ENCODE measurements at regions of chr9 and their contacts with region 1.

Region 1: DNA sequence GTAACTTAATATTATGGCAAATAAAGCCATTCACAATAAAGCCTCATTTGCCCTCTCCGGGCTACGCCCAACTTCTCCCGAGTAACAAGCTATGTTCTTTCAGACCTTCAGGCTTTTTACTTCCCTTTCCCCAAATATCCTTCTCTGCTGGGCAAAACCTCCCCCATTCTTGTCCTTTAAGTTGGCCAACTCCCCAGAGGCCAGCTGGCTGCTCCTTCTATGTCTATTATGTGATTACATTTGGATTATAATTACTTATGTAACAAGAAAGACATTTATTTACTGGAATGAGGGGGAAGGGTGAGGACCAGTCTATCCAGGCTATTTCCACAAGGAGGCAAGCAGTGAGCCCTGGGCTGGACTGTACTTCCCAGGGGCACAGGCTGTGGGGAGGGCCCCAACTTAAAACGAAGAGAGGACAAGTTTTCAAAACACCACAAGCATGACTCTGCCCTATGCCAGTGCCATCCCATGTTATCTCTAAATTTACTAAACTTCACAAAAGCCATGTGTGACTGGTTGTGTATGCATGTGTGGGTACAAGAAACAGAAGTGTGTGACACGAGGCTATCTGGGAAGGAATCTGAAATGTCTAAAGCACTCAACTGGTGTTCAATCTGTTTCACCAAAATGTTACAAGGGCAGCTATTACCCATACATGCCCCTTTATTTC is 84.5 kb downstream of the GNAQ start:
- DNase-seq: no peak
- H3K4me3 ChIP-seq: no peak overlapping the region
- H3K27ac ChIP-seq: no peak overlapping the region
- H3K4me1 ChIP-seq: peaks cover under 1% of the 10 kb centered on the region
- H3K27me3 ChIP-seq: no peaks in the 10 kb centered on the region
- CTCF ChIP-seq: no peak
- POLR2A ChIP-seq: no peak

Region 2: GRCh38 chr9:77802515-77803293 is 144.4 kb before region 1 on chr9:
- CTCF ChIA-PET with region 1: no interaction called
- POLR2A ChIA-PET with region 1: no interaction called
- dilution Hi-C with region 1: no loop called
- intact Hi-C with region 1: no loop called
- DNase-seq: no peak
- H3K4me3 ChIP-seq: no peak overlapping the region
- H3K27ac ChIP-seq: no peak overlapping the region
- H3K4me1 ChIP-seq: peaks cover 10% of the 10 kb centered on the region
- H3K27me3 ChIP-seq: no peaks in the 10 kb centered on the region
- CTCF ChIP-seq: no peak
- POLR2A ChIP-seq: no peak

Region 3: GRCh38 chr9:77926309-77926959 is 20.6 kb before region 1 on chr9:
- CTCF ChIA-PET with region 1: interaction called, 6 read pairs
- POLR2A ChIA-PET with region 1: no interaction called
- dilution Hi-C with region 1: no loop called
- intact Hi-C with region 1: loop called (anchors 2 kb)
- DNase-seq: peak; percentile 73
- H3K4me3 ChIP-seq: no peak overlapping the region
- H3K27ac ChIP-seq: peak overlapping the region; percentile 30
- H3K4me1 ChIP-seq: peaks cover 20% of the 10 kb centered on the region
- H3K27me3 ChIP-seq: no peaks in the 10 kb centered on the region
- CTCF ChIP-seq: no peak
- POLR2A ChIP-seq: no peak

Measured in endothelial cell of umbilical vein (primary cell).